GM12878 (cell line): ENCODE measurements at regions of chr17 and their contacts with region 1.

Region 1: GRCh38 chr17:75261336-75262111 is at the starts of genes GGA3 and MRPS7:
- DNase-seq: peak; percentile 75
- ATAC-seq: peak; percentile 96
- H3K4me3 ChIP-seq: peak within 1 kb of the TSS; percentile 86
- H3K27ac ChIP-seq: peak within 1 kb of the TSS; percentile 99
- H3K4me1 ChIP-seq: peaks cover 9% of the 10 kb centered on the region
- H3K27me3 ChIP-seq: no peaks in the 10 kb centered on the region
- CTCF ChIP-seq: no peak; a peak in 1 of 6 replicates
- EP300 ChIP-seq: 0 out of 4 replicates have a peak, but pooled peaks of 1 of the 2 experiments have one; percentile 12
- POLR2A ChIP-seq: peak; percentile 91
- RAD21 ChIP-seq: no peak
- polyA plus RNA-seq, gene GGA3: 7.0 to 8.1 TPM
- polyA plus RNA-seq, gene MRPS7: 161 to 209 TPM

Region 2: DNA sequence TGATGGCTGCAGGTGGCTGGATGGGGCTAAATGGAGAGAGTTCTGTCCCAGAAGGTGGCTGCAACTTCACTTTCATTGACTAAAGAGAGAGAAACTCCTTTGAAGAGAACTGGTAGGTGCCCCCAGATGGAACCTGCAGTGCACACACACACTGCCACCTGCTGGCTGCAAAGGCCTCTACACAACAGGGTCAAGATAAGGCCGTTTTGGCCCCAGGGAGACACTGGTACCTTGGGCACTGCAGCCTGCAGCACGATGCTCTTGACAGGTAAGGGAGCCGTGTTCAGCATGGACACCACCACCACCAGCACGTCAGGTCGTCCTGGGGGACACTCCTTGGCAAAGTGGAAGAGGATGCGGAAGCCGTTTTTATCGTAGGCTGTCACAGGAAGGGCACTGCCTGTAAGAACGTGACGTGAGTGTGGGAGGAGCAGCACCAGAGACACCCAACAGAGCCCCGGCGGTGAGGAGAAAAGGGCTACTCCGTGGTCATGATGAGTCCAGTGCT is 22.8 kb before region 1 on chr17:
- CTCF ChIA-PET with region 1: interaction called, 30 read pairs
- POLR2A ChIA-PET with region 1: interaction called, 21 read pairs
- RAD21 ChIA-PET with region 1: interaction called, 7 read pairs
- SMC1A ChIA-PET with region 1: interaction called, 6 read pairs
- in situ Hi-C with region 1: no loop called
- intact Hi-C with region 1: no loop called
- DNase-seq: no peak
- ATAC-seq: peak; percentile 96
- H3K4me3 ChIP-seq: no peak overlapping the region
- H3K27ac ChIP-seq: no peak overlapping the region
- H3K4me1 ChIP-seq: peaks cover 28% of the 10 kb centered on the region
- H3K27me3 ChIP-seq: no peaks in the 10 kb centered on the region
- CTCF ChIP-seq: peak; percentile 83 to 94 (median 89)
- EP300 ChIP-seq: no peak
- POLR2A ChIP-seq: peak; percentile 71
- RAD21 ChIP-seq: peak; percentile 67

Region 3: GRCh38 chr17:75250009-75250471 is 11.5 kb before region 1 on chr17:
- CTCF ChIA-PET with region 1: interaction called, 24 read pairs
- POLR2A ChIA-PET with region 1: interaction called, 81 read pairs
- RAD21 ChIA-PET with region 1: interaction called, 21 read pairs
- SMC1A ChIA-PET with region 1: interaction called, 62 read pairs
- in situ Hi-C with region 1: no loop called
- intact Hi-C with region 1: no loop called
- DNase-seq: peak; percentile 79
- ATAC-seq: peak; percentile 98
- H3K4me3 ChIP-seq: peak overlapping the region; percentile 66
- H3K27ac ChIP-seq: peak overlapping the region; percentile 70
- H3K4me1 ChIP-seq: peaks cover 27% of the 10 kb centered on the region
- H3K27me3 ChIP-seq: no peaks in the 10 kb centered on the region
- CTCF ChIP-seq: no peak
- EP300 ChIP-seq: 0 out of 4 replicates have a peak, but pooled peaks of 1 of the 2 experiments have one; percentile 11
- POLR2A ChIP-seq: no peak
- RAD21 ChIP-seq: no peak

Region 4: DNA sequence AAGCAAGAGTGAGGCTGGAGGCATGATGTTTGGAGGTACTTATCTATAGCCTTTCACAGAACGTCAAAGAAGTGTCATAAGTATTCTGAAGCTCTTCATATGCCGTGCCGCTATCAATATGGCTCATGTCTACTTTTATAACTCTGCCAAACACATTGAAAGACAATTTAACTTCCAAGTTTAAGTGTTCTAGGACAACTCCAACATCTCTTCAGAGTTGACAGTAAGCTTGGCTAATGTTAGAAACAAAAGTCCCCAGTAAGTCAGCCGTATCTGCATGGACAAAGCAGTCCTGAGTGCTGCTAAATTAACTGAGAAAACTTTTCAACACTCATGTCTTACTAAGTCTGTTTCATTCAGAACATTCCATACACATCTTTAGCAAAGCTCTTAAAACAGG is 111.8 kb after region 1 on chr17:
- CTCF ChIA-PET with region 1: no interaction called
- POLR2A ChIA-PET with region 1: no interaction called
- RAD21 ChIA-PET with region 1: no interaction called
- SMC1A ChIA-PET with region 1: no interaction called
- in situ Hi-C with region 1: no loop called
- intact Hi-C with region 1: no loop called
- DNase-seq: no peak
- ATAC-seq: no peak
- H3K4me3 ChIP-seq: no peak overlapping the region
- H3K27ac ChIP-seq: no peak overlapping the region
- H3K4me1 ChIP-seq: peaks cover 19% of the 10 kb centered on the region
- H3K27me3 ChIP-seq: no peaks in the 10 kb centered on the region
- CTCF ChIP-seq: no peak
- EP300 ChIP-seq: no peak
- POLR2A ChIP-seq: no peak
- RAD21 ChIP-seq: no peak

Region 5: DNA sequence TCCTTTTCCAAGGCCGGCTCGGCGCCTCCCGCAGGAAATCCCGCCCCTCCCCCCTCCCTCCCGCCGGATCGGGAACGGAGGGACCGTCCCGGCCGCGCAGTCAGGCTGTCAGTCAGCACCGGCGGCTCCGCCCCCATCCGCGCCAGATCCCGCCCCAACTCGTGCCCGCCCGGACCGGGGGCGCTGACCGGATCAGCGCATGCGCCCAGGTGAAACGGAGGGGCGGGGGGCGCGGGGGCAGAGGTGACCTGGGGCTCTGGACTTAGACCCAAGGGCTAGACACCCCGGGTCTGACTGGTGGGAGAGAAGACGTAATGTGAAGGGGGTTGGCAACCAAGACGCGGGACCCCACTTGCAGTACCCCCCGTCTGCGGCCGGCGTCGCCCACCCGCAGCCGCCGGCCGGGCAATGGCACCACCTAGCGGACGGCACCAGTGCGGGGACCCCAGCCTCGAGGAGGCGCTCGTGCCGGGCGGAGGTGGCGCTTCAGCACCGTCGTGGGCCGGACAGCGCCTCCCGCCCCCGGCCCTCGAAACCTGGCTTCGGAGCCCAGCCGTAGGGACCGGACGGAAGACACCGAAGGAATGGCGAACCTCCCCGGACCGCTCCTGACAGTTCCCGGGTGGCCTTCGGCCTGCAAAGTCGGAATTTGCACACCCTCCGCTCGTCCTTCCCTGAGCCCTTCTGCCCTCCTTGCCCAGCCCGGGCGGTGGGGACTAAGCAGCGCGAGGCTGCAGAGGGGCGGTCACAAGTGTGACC is 254.2 kb after region 1 on chr17 and contains the start of gene CASKIN2:
- CTCF ChIA-PET with region 1: no interaction called
- POLR2A ChIA-PET with region 1: no interaction called
- RAD21 ChIA-PET with region 1: no interaction called
- SMC1A ChIA-PET with region 1: no interaction called
- in situ Hi-C with region 1: no loop called
- intact Hi-C with region 1: loop called (anchors 10 kb)
- DNase-seq: peak; percentile 30
- ATAC-seq: peak; percentile 71
- H3K4me3 ChIP-seq: peak within 1 kb of the TSS; percentile 90
- H3K27ac ChIP-seq: peak within 1 kb of the TSS; percentile 10; the same call in 1 of the 2 replicates
- H3K4me1 ChIP-seq: peaks cover 20% of the 10 kb centered on the region
- H3K27me3 ChIP-seq: no peaks in the 10 kb centered on the region
- CTCF ChIP-seq: peak; percentile 95 to 99 (median 95)
- EP300 ChIP-seq: no peak
- POLR2A ChIP-seq: no peak
- RAD21 ChIP-seq: peak; percentile 65
- polyA plus RNA-seq, gene CASKIN2: 0.02 TPM in 1 of 2 experiments, not detected in the other